ENCODE measurements at regions of chr13 and their contacts with region 1.

Region 1: GRCh38 chr13:31909864-31910551 is 121.6 kb upstream of the FRY start:
- DNase-seq: peak in 1 of 2 experiments; percentile 68
- H3K4me3 ChIP-seq: no peak overlapping the region
- H3K4me3 Mint-ChIP-seq: no peak overlapping the region
- H3K27ac Mint-ChIP-seq: no peak overlapping the region
- H3K4me1 ChIP-seq: peaks cover 10% of the 10 kb centered on the region
- H3K4me1 Mint-ChIP-seq: peaks cover 7% of the 10 kb centered on the region
- H3K27me3 ChIP-seq: no peaks in the 10 kb centered on the region
- H3K27me3 Mint-ChIP-seq: peaks cover 8% of the 10 kb centered on the region
- CTCF ChIP-seq: peak; percentile 85 to 89

Region 2: GRCh38 chr13:31945202-31945978 is 35.4 kb after region 1 on chr13:
- CTCF ChIA-PET with region 1: interaction called, 11 read pairs
- POLR2A ChIA-PET with region 1: no interaction called
- intact Hi-C with region 1: no loop called
- DNase-seq: no peak
- H3K4me3 ChIP-seq: no peak overlapping the region
- H3K4me3 Mint-ChIP-seq: no peak overlapping the region
- H3K27ac Mint-ChIP-seq: no peak overlapping the region
- H3K4me1 ChIP-seq: no peaks in the 10 kb centered on the region
- H3K4me1 Mint-ChIP-seq: peaks cover 15% of the 10 kb centered on the region
- H3K27me3 ChIP-seq: no peaks in the 10 kb centered on the region
- H3K27me3 Mint-ChIP-seq: no peaks in the 10 kb centered on the region
- CTCF ChIP-seq: no peak

Region 3: DNA sequence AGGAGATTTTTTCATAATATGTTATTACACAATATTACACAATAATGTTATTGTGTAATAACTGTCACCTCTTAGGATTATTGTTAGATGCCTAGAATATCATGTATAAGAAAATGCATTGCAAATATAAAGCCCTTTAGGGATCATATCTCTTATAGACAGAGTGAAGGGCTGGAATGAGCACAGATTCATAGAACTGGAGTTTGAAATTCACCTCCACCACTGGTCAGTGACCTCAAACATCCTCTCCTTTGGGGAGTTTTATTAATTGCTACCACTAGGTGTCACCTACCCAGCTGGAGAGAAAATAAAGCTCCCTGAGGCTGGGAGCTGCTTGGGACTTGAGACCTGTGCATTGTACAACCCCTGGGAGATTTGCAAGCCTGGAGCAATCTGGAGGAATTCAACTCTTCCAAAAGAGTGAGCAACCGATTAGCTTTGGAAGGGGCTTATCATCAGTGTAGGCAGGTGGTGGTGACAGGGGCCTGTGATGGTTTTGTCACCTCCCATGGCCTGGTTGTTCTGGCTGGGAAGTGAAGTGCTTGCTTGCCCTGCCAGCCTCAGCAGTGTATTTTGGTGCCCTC is 91.3 kb after region 1 on chr13:
- CTCF ChIA-PET with region 1: interaction called, 11 read pairs
- POLR2A ChIA-PET with region 1: no interaction called
- intact Hi-C with region 1: loop called (anchors 2 kb)
- DNase-seq: peak; percentile 54 to 67
- H3K4me3 ChIP-seq: no peak overlapping the region
- H3K4me3 Mint-ChIP-seq: no peak overlapping the region
- H3K27ac Mint-ChIP-seq: no peak overlapping the region
- H3K4me1 ChIP-seq: peaks cover 17% of the 10 kb centered on the region
- H3K4me1 Mint-ChIP-seq: peaks cover 22% of the 10 kb centered on the region
- H3K27me3 ChIP-seq: no peaks in the 10 kb centered on the region
- H3K27me3 Mint-ChIP-seq: no peaks in the 10 kb centered on the region
- CTCF ChIP-seq: peak; percentile 53 to 65

Region 4: GRCh38 chr13:32019612-32020233 is 109.7 kb after region 1 on chr13:
- CTCF ChIA-PET with region 1: interaction called, 3 read pairs
- POLR2A ChIA-PET with region 1: no interaction called
- intact Hi-C with region 1: loop called (anchors 5 kb)
- DNase-seq: peak; percentile 68 to 75
- H3K4me3 ChIP-seq: no peak overlapping the region
- H3K4me3 Mint-ChIP-seq: no peak overlapping the region
- H3K27ac Mint-ChIP-seq: no peak overlapping the region
- H3K4me1 ChIP-seq: no peaks in the 10 kb centered on the region
- H3K4me1 Mint-ChIP-seq: peaks cover 9% of the 10 kb centered on the region
- H3K27me3 ChIP-seq: no peaks in the 10 kb centered on the region
- H3K27me3 Mint-ChIP-seq: no peaks in the 10 kb centered on the region
- CTCF ChIP-seq: peak; percentile 87 to 95

Region 5: GRCh38 chr13:32310134-32310706 is 400.2 kb after region 1 on chr13:
- CTCF ChIA-PET with region 1: interaction called, 8 read pairs
- POLR2A ChIA-PET with region 1: interaction called, 8 read pairs
- intact Hi-C with region 1: loop called (anchors 1 kb)
- DNase-seq: peak in 1 of 2 experiments; percentile 62
- H3K4me3 ChIP-seq: no peak overlapping the region
- H3K4me3 Mint-ChIP-seq: no peak overlapping the region
- H3K27ac Mint-ChIP-seq: no peak overlapping the region
- H3K4me1 ChIP-seq: peaks cover 23% of the 10 kb centered on the region
- H3K4me1 Mint-ChIP-seq: peaks cover 6% of the 10 kb centered on the region
- H3K27me3 ChIP-seq: no peaks in the 10 kb centered on the region
- H3K27me3 Mint-ChIP-seq: no peaks in the 10 kb centered on the region
- CTCF ChIP-seq: peak; percentile 70 to 84

Region 6: DNA sequence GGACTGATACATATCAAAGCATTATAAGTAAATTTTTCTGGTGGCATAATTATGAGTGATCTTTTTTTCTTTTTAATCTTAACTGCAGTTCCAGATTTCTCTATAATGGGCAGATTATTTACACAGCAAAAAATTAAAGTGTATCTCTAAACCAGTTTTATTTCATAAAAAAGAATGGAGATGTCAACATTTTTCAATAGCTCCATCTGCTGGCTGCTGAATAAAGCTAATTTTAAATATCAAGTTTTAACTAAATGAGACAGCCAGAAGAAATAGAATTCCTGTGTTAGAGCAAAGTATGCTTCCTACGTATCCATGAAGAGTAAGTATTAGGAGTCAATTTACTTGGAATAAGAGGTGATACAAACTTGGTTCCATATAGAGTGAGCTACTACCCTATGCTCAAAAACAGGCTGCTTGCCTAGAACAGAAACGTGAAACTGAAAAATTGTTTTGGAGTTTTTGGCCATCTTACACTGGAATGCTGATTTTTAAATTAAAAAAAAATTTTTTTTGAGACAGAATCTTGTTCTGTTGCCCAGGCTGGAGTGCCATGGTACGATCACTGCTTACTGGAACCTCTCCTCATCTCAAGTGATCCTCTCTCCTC is 671.3 kb after region 1 on chr13:
- CTCF ChIA-PET with region 1: interaction called, 11 read pairs
- POLR2A ChIA-PET with region 1: no interaction called
- intact Hi-C with region 1: no loop called
- DNase-seq: peak in 1 of 2 experiments; percentile 14
- H3K4me3 ChIP-seq: no peak overlapping the region
- H3K4me3 Mint-ChIP-seq: no peak overlapping the region
- H3K27ac Mint-ChIP-seq: no peak overlapping the region
- H3K4me1 ChIP-seq: no peaks in the 10 kb centered on the region
- H3K4me1 Mint-ChIP-seq: no peaks in the 10 kb centered on the region
- H3K27me3 ChIP-seq: no peaks in the 10 kb centered on the region
- H3K27me3 Mint-ChIP-seq: peaks cover 6% of the 10 kb centered on the region
- CTCF ChIP-seq: peak; percentile 42 to 61